ENCODE measurements at regions of chr1 and their contacts with region 1.

Region 1: GRCh38 chr1:15678578-15678977 is 5.5 kb upstream of the PLEKHM2 start:
- DNase-seq: no peak
- H3K4me3 ChIP-seq: no peak overlapping the region
- H3K27ac ChIP-seq: no peak overlapping the region
- H3K4me1 ChIP-seq: no peaks in the 10 kb centered on the region
- H3K27me3 ChIP-seq: no peaks in the 10 kb centered on the region
- CTCF ChIP-seq: no peak
- POLR2A ChIP-seq: no peak

Region 2: GRCh38 chr1:15633756-15634420 is 44.7 kb before region 1 on chr1:
- intact Hi-C with region 1: loop called (anchors 5 kb)
- DNase-seq: no peak
- H3K4me3 ChIP-seq: no peak overlapping the region
- H3K27ac ChIP-seq: no peak overlapping the region
- H3K4me1 ChIP-seq: no peaks in the 10 kb centered on the region
- H3K27me3 ChIP-seq: no peaks in the 10 kb centered on the region
- CTCF ChIP-seq: no peak
- POLR2A ChIP-seq: no peak